Right cardiac atrium (tissue), 5 donors: ENCODE measurements at regions of chrX and their contacts with region 1.

Region 1: GRCh38 chrX:69615779-69616456 is at the start of gene EDA:
- DNase-seq: peak; percentile 90 to 96 (median 95)
- ATAC-seq: peak; percentile 99
- H3K4me3 ChIP-seq: peak within 1 kb of the TSS; percentile 82
- H3K27ac ChIP-seq: peak within 1 kb of the TSS; percentile 59
- H3K4me1 ChIP-seq: peaks cover 3% of the 10 kb centered on the region
- H3K27me3 ChIP-seq: no peaks in the 10 kb centered on the region
- total RNA-seq, gene EDA: 19.2 to 26.1 (median 22.3) TPM

Region 2: GRCh38 chrX:69323786-69324720 is 291.9 kb before region 1 on chrX:
- intact Hi-C with region 1: no loop called
- DNase-seq: no peak
- ATAC-seq: no peak
- H3K4me3 ChIP-seq: no peak overlapping the region
- H3K27ac ChIP-seq: no peak overlapping the region
- H3K4me1 ChIP-seq: no peaks in the 10 kb centered on the region
- H3K27me3 ChIP-seq: no peaks in the 10 kb centered on the region

Region 3: GRCh38 chrX:69396916-69397315 is 219.0 kb before region 1 on chrX:
- intact Hi-C with region 1: no loop called
- DNase-seq: no peak
- ATAC-seq: no peak
- H3K4me3 ChIP-seq: no peak overlapping the region
- H3K27ac ChIP-seq: no peak overlapping the region
- H3K4me1 ChIP-seq: no peaks in the 10 kb centered on the region
- H3K27me3 ChIP-seq: no peaks in the 10 kb centered on the region

Region 4: DNA sequence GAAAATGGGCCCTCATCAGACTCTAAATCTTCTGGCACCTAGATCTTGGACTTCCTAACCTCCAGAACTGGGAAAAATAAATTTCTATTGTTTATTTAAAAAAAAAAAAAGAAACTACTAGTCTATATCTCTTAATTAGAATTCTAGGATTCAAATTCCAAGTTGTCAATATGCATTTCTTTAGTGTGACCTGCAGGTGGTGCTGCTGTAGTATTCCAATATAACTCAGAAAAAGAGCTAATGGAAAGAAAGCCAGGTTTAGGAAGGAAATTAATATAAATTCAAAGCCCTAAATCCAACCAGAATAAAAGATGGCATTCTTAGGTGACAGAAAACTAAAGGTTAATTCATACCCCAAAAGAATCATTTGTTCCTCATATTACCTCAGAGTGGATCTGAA is 191.8 kb before region 1 on chrX:
- intact Hi-C with region 1: loop called in 1 of 4 experiments (anchors 10 kb)
- DNase-seq: no peak
- ATAC-seq: no peak
- H3K4me3 ChIP-seq: no peak overlapping the region
- H3K27ac ChIP-seq: no peak overlapping the region
- H3K4me1 ChIP-seq: no peaks in the 10 kb centered on the region
- H3K27me3 ChIP-seq: no peaks in the 10 kb centered on the region

Region 5: GRCh38 chrX:69538321-69538876 is 77.5 kb before region 1 on chrX:
- intact Hi-C with region 1: loop called in 2 of 4 experiments (anchors 5 kb)
- DNase-seq: peak; percentile 80 to 92 (median 90)
- ATAC-seq: peak; percentile 95 to 96
- H3K4me3 ChIP-seq: peak overlapping the region; percentile 33
- H3K27ac ChIP-seq: no peak overlapping the region
- H3K4me1 ChIP-seq: peaks cover 3% of the 10 kb centered on the region
- H3K27me3 ChIP-seq: no peaks in the 10 kb centered on the region